ENCODE measurements at regions of chr3 and their contacts with region 1.

Region 1: GRCh38 chr3:16177962-16178627 is 3.6 kb downstream of the GALNT15 start:
- DNase-seq: peak; percentile 93
- ATAC-seq: peak; percentile 66

Region 2: DNA sequence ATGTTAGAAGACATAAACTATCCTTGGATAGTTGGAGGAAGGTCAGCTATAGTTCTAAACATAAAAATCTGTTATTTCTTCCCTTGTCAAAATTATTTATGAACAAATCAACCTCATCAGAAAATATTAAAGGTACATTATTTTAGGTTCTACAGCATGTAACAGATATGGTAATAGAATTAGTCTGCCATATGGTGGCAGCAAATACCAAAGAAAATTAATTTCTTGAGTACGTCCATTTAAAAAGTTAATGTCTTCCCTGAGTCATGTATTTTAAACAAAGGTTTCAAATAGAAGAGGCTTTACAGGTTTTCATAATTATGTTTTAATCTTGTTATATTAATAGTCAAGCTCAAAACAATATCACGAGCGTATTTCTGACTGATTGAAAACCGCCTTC is 362.4 kb before region 1 on chr3:
- intact Hi-C with region 1: loop called (anchors 5 kb)
- DNase-seq: no peak
- ATAC-seq: peak; percentile 68

Region 3: DNA sequence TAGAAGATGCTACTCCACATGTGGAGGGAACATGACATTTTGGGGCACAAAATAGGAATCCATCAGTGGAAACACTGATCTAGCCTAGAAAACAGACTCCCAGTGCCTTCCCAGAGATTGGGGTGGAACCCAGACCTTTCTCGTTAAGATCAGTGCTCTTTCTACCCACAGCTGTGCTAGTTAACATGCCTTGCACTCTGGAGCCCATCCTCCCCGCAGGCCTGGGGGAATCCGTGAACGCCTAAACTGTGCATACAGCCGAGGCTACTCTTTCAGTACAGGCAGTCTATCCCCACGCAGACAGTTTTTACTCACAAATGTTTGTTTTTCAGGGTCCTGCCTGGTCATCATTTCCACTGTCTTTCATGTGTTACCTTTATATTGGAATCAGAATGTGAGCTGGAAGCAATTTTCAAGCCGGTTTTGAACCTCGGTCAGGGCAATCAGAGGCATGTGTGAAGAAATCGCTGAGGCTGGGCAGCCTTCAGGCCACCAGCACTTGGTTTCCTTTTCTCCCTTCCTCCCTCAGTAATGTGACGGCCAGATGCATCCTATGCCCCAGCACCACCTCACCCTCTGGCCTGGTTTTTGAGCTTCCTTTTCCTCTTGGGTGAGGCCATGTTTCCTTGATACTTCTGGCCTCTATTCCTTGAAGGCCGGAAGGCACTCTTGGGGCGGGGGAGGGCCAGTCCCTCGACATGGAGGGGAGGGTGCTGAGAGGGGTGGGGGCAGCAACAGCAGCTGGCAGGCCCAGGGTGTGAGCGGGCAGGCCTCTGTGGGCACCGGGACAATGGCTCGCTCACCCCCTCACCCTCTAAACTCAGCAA is 127.2 kb before region 1 on chr3:
- intact Hi-C with region 1: loop called (anchors 5 kb)
- DNase-seq: no peak
- ATAC-seq: peak; percentile 9

Measured in sciatic nerve (tissue), 2 donors.